Endothelial cell of umbilical vein (primary cell): ENCODE measurements at regions of chr9 and their contacts with region 1.

Region 1: DNA sequence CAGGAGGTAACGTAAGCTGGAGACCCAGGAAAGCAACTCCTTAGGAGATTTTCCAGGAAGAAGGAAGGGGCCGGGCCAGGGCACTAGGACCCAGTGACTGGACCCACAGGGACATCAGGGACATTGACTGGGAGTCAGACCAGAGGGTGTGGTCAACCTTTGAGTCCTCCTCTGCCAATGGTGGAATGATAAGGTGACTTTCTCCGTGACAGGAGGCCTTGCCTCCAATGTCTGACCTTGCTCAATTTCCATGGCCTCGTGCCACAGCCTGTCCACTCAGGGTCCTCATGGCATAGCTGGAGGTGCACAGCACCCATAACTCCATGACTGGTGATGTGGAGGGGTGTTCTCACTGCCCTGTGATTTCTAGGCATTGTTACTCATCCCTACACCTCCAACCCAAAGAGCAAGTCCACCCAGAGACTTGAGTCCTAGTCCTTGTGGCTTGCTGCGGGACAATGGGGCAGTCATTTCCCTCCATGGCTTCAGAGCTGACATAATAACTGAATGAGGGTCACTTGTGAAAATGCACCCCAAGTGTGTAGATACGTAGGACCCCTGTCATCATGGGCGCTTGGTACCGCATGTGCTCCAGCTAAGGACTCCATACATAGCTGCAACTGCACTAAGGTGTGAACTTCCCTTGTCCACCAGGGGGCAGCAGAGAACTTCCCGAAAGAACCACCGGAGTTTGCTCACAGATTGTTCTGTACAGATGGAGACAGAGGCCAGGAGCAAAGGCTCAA is 4.1 kb upstream of the AMBP start:
- DNase-seq: peak; percentile 82
- H3K4me3 ChIP-seq: no peak overlapping the region
- H3K27ac ChIP-seq: no peak overlapping the region
- H3K4me1 ChIP-seq: no peaks in the 10 kb centered on the region
- H3K27me3 ChIP-seq: peaks cover 5 to 15% of the 10 kb centered on the region in 2 experiments
- CTCF ChIP-seq: peak; percentile 91 to 92
- POLR2A ChIP-seq: no peak

Region 2: GRCh38 chr9:113737517-113738271 is 344.5 kb before region 1 on chr9:
- CTCF ChIA-PET with region 1: interaction called, 8 read pairs
- POLR2A ChIA-PET with region 1: no interaction called
- dilution Hi-C with region 1: no loop called
- intact Hi-C with region 1: loop called (anchors 1 kb)
- DNase-seq: peak; percentile 69
- H3K4me3 ChIP-seq: no peak overlapping the region
- H3K27ac ChIP-seq: no peak overlapping the region
- H3K4me1 ChIP-seq: no peaks in the 10 kb centered on the region
- H3K27me3 ChIP-seq: peaks cover 6 to 13% of the 10 kb centered on the region in 2 experiments
- CTCF ChIP-seq: peak; percentile 72 to 78
- POLR2A ChIP-seq: no peak

Region 3: DNA sequence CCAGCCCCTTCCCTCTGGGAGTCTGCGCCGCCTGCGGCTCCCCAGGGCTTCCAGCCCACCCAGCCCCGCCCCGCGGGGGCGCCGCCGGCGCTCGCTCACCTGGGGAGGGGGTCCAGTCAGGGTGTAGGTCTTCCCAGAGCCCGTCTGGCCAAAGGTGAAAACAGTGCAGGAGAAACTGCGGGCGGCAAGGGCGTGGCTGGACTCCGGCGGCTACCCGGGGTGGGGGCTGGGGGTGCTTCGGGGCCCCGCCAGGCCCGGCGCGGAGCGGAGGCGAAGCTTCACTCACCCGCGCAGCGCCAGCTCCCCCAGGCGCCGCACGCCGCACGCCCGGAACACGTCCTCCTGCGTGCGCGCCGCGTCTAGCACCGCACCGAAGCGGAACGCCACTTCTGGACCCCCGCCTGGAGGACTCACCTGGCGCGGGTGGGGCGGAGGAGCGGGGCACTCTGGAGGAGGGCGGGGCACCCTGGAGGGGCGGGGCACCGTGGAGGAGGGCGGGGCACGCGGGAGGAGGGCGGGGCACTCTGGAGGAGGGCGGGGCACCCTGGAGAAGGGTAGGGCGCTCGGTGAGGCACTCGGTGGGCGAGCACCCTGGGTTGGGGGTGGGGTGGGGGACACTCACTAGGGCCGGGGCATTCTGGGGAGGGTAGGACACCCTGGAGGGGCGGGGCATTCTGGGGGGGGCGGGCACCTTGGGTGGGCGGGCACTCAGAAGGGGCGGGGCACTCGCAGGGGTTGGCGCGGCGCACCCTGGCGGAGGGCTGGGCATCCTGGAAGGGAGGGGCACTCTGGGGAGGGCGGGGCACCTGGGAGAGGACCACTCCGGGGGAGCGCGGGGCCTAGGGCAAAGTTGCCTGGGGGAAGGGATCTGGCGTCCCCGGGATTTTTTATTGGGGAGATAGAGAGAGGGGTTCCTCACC is 16.1 kb after region 1 on chr9:
- CTCF ChIA-PET with region 1: interaction called, 64 read pairs
- POLR2A ChIA-PET with region 1: no interaction called
- dilution Hi-C with region 1: no loop called
- intact Hi-C with region 1: no loop called
- DNase-seq: no peak
- H3K4me3 ChIP-seq: peak overlapping the region in 2 of 3 experiments; percentile 10 to 31
- H3K27ac ChIP-seq: no peak overlapping the region
- H3K4me1 ChIP-seq: peaks cover 10% of the 10 kb centered on the region
- H3K27me3 ChIP-seq: no peaks in the 10 kb centered on the region
- CTCF ChIP-seq: no peak
- POLR2A ChIP-seq: no peak

Region 4: GRCh38 chr9:114238891-114239875 is 157.0 kb after region 1 on chr9:
- CTCF ChIA-PET with region 1: interaction called, 17 read pairs
- POLR2A ChIA-PET with region 1: no interaction called
- dilution Hi-C with region 1: no loop called
- intact Hi-C with region 1: no loop called
- DNase-seq: peak; percentile 51
- H3K4me3 ChIP-seq: no peak overlapping the region
- H3K27ac ChIP-seq: no peak overlapping the region
- H3K4me1 ChIP-seq: peaks cover 8% of the 10 kb centered on the region
- H3K27me3 ChIP-seq: no peaks in the 10 kb centered on the region
- CTCF ChIP-seq: peak in 1 of 2 donors; percentile 50
- POLR2A ChIP-seq: no peak

Region 5: GRCh38 chr9:114276908-114277821 is 195.0 kb after region 1 on chr9:
- CTCF ChIA-PET with region 1: interaction called, 18 read pairs
- POLR2A ChIA-PET with region 1: no interaction called
- dilution Hi-C with region 1: loop called (anchors 25 kb)
- intact Hi-C with region 1: no loop called
- DNase-seq: peak; percentile 38
- H3K4me3 ChIP-seq: no peak overlapping the region
- H3K27ac ChIP-seq: peak overlapping the region; percentile 42
- H3K4me1 ChIP-seq: peaks cover 2% of the 10 kb centered on the region
- H3K27me3 ChIP-seq: no peaks in the 10 kb centered on the region
- CTCF ChIP-seq: no peak
- POLR2A ChIP-seq: no peak

Region 6: DNA sequence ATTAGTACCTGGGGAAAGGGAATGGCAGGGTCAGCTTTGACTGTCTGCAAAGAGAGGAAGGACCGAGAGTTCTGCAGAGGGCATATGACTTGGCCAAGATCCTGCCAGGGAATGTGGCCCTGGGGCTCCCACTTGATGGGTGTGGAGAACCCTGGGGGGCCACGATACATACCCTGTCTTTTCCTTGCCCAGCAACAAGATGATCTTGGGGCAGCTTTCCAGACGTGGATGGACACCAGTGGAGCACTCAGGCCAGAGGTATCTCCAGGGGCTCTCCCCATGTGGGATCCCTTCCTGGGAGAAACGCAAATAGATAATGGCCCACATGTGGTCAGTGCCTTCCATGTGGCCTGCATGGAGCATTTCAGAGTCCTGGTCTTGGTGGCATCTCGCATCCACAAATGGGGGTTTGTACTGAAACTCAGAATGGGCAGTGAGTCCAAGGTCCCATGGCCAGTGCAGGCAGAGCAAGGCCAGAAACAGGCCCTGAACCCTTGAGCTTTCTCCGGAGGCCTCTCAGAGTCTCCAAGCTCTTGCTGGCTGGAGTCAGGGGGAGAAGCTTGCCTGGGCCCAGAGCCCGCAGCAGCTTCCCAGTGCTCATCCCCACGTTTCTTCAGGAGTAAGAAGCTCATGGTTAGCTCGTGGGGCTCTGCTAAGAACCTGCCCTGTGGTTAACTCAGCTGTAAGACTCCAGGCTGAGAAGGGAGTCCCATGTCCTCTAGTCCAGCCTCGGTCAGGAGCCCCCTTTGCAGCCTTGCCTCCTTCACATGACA is 222.4 kb after region 1 on chr9:
- CTCF ChIA-PET with region 1: interaction called, 6 read pairs
- POLR2A ChIA-PET with region 1: no interaction called
- dilution Hi-C with region 1: loop called (anchors 25 kb)
- intact Hi-C with region 1: loop called (anchors 1 kb)
- DNase-seq: no peak
- H3K4me3 ChIP-seq: no peak overlapping the region
- H3K27ac ChIP-seq: no peak overlapping the region
- H3K4me1 ChIP-seq: no peaks in the 10 kb centered on the region
- H3K27me3 ChIP-seq: no peaks in the 10 kb centered on the region
- CTCF ChIP-seq: no peak
- POLR2A ChIP-seq: no peak

Region 7: DNA sequence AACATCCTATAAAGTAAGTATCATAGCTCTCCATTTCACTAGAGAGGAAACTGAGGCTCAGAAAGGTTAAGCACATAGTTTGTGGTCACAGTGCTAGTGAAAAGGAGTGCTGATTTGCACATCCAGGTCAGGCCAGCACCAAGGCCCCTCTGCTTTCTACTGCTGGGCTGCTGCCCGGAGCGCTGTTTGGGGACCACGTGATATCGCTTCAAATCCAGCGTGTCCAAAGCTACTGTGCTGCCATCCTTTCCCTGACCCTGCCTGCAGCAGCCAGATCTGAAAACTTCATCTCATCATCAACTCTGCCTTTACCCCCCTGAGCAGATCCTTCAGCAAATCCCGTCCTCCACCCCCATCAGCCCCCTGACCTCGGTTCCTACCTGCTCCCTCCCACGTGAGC is 346.3 kb after region 1 on chr9:
- CTCF ChIA-PET with region 1: no interaction called
- POLR2A ChIA-PET with region 1: no interaction called
- dilution Hi-C with region 1: no loop called
- intact Hi-C with region 1: no loop called
- DNase-seq: no peak
- H3K4me3 ChIP-seq: no peak overlapping the region
- H3K27ac ChIP-seq: no peak overlapping the region
- H3K4me1 ChIP-seq: no peaks in the 10 kb centered on the region
- H3K27me3 ChIP-seq: peaks cover 3 to 4% of the 10 kb centered on the region in 2 experiments
- CTCF ChIP-seq: no peak
- POLR2A ChIP-seq: no peak

Region 8: GRCh38 chr9:114551883-114552685 is 469.9 kb after region 1 on chr9:
- CTCF ChIA-PET with region 1: no interaction called
- POLR2A ChIA-PET with region 1: no interaction called
- dilution Hi-C with region 1: no loop called
- intact Hi-C with region 1: no loop called
- DNase-seq: peak; percentile 86
- H3K4me3 ChIP-seq: no peak overlapping the region
- H3K27ac ChIP-seq: peak overlapping the region; percentile 23
- H3K4me1 ChIP-seq: peaks cover 4% of the 10 kb centered on the region
- H3K27me3 ChIP-seq: no peaks in the 10 kb centered on the region
- CTCF ChIP-seq: no peak
- POLR2A ChIP-seq: no peak

Region 9: DNA sequence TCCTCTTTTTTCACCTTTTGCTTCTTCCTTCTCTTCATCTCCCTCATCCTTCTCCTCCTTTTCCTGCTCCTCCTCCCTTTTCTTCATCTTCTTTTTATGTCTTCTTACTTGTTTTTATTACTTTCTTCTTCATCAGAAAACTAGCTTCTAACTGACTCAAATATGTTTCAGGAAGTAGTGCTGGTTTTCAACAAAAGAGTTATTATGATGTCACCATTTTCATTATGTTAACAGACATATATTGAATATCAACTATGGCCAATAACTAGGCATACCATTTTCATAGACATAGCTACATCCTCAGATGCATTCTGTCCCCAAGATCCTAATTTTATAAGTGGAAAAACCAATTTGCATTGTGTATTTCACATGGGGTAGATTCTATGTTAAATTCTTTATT is 1818.5 kb after region 1 on chr9:
- CTCF ChIA-PET with region 1: no interaction called
- POLR2A ChIA-PET with region 1: no interaction called
- dilution Hi-C with region 1: no loop called
- intact Hi-C with region 1: no loop called
- DNase-seq: no peak
- H3K4me3 ChIP-seq: no peak overlapping the region
- H3K27ac ChIP-seq: no peak overlapping the region
- H3K4me1 ChIP-seq: no peaks in the 10 kb centered on the region
- H3K27me3 ChIP-seq: no peaks in the 10 kb centered on the region
- CTCF ChIP-seq: no peak
- POLR2A ChIP-seq: no peak